Breast epithelium (tissue), 4 donors: ENCODE measurements at regions of chr11 and their contacts with region 1.

Region 1: DNA sequence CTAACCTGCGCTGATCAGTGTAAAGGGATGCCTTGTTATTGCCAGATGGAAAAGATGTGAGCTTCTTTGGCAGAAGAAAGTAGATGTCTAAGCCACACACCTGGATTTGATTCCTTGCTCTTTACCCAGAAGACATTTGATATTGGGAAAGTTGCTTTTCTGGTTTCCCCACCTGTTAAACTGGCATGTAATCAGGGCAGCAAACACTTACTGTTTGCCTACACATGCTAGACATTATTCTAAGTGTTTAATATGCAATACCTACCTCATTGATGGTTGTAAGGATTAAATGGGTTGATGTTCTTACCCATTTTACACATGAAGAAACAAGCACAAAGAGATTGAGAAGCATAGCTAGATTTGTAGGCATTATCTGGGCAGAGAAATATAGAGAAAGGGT is 16.6 kb downstream of the ASRGL1 start:
- DNase-seq: no peak
- H3K4me3 ChIP-seq: no peak overlapping the region
- H3K27ac ChIP-seq: no peak overlapping the region
- H3K4me1 ChIP-seq: no peaks in the 10 kb centered on the region
- H3K27me3 ChIP-seq: no peaks in the 10 kb centered on the region
- CTCF ChIP-seq: no peak
- POLR2A ChIP-seq: no peak

Region 2: GRCh38 chr11:62298975-62299374 is 54.9 kb before region 1 on chr11 and contains the start of gene SCGB1D4:
- intact Hi-C with region 1: loop called (anchors 2 kb)
- DNase-seq: no peak
- H3K4me3 ChIP-seq: no peak within 1 kb of the TSS
- H3K27ac ChIP-seq: no peak within 1 kb of the TSS
- H3K4me1 ChIP-seq: no peaks in the 10 kb centered on the region
- H3K27me3 ChIP-seq: peaks cover 0 to 5% of the 10 kb centered on the region in 2 donors
- CTCF ChIP-seq: no peak
- POLR2A ChIP-seq: no peak
- total RNA-seq, gene SCGB1D4: not detected

Region 3: GRCh38 chr11:62315431-62315830 is 38.4 kb before region 1 on chr11:
- intact Hi-C with region 1: no loop called
- DNase-seq: no peak
- H3K4me3 ChIP-seq: no peak overlapping the region
- H3K27ac ChIP-seq: no peak overlapping the region
- H3K4me1 ChIP-seq: no peaks in the 10 kb centered on the region
- H3K27me3 ChIP-seq: peaks cover 0 to 8% of the 10 kb centered on the region in 2 donors
- CTCF ChIP-seq: no peak
- POLR2A ChIP-seq: no peak